HEK293 (cell line): ENCODE measurements at regions of chr10 and their contacts with region 1.

Region 1: DNA sequence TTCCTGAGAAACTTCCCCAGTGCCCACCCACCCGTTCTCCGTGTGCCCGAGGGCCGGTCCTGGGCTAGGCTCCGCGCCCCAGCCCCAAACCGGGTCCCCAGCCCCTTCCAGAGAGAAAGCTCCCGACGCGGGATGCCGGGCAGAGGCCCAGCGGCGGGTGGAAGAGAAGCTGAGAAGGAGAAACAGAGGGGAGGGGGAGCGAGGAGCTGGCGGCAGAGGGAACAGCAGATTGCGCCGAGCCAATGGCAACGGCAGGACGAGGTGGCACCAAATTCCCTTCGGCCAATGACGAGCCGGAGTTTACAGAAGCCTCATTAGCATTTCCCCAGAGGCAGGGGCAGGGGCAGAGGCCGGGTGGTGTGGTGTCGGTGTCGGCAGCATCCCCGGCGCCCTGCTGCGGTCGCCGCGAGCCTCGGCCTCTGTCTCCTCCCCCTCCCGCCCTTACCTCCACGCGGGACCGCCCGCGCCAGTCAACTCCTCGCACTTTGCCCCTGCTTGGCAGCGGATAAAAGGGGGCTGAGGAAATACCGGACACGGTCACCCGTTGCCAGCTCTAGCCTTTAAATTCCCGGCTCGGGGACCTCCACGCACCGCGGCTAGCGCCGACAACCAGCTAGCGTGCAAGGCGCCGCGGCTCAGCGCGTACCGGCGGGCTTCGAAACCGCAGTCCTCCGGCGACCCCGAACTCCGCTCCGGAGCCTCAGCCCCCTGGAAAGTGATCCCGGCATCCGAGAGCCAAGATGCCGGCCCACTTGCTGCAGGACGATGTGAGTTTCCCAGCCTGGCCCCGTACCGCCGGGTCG is at the start of gene SCD:
- H3K4me3 ChIP-seq: peak within 1 kb of the TSS; percentile 77
- H3K27ac ChIP-seq: peak within 1 kb of the TSS; percentile 99
- H3K4me1 ChIP-seq: peaks cover 21% of the 10 kb centered on the region
- CTCF ChIP-seq: no peak

Region 2: GRCh38 chr10:99845837-99846382 is 501.1 kb before region 1 on chr10:
- CTCF ChIA-PET with region 1: no interaction called
- POLR2A ChIA-PET with region 1: interaction called, 13 read pairs
- H3K4me3 ChIP-seq: no peak overlapping the region
- H3K27ac ChIP-seq: no peak overlapping the region
- H3K4me1 ChIP-seq: no peaks in the 10 kb centered on the region
- CTCF ChIP-seq: peak; percentile 87; the same call in 1 of the 2 replicates

Region 3: DNA sequence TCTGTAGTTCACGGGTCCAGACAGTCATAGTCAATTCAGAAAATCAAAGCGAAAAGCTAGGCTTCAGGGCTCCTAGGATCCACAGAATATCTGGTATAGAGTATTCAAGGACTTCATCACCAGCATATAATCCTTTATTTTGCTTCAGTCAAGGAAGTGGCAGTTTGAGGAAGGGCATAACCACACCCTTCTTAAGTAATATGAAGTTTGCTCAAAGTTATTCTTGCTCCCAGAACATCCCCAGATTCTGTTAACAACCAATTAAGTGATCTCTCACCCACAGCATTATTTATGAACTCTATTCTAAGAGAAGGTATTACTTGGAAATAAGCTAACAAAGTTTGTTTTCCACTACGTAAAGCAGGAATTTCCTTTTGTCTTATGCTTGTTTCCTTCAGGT is 92.8 kb before region 1 on chr10:
- CTCF ChIA-PET with region 1: no interaction called
- POLR2A ChIA-PET with region 1: no interaction called
- H3K4me3 ChIP-seq: no peak overlapping the region
- H3K27ac ChIP-seq: no peak overlapping the region
- H3K4me1 ChIP-seq: no peaks in the 10 kb centered on the region
- CTCF ChIP-seq: no peak

Region 4: GRCh38 chr10:100359529-100360150 is 12.7 kb after region 1 on chr10:
- CTCF ChIA-PET with region 1: interaction called, 3 read pairs
- POLR2A ChIA-PET with region 1: interaction called, 26 read pairs
- H3K4me3 ChIP-seq: no peak overlapping the region
- H3K27ac ChIP-seq: no peak overlapping the region
- H3K4me1 ChIP-seq: peaks cover 5% of the 10 kb centered on the region
- CTCF ChIP-seq: no peak

Region 5: GRCh38 chr10:100364735-100365391 is 17.9 kb after region 1 on chr10:
- CTCF ChIA-PET with region 1: interaction called, 15 read pairs
- POLR2A ChIA-PET with region 1: interaction called, 29 read pairs
- H3K4me3 ChIP-seq: no peak overlapping the region
- H3K27ac ChIP-seq: peak overlapping the region; percentile 75
- H3K4me1 ChIP-seq: peaks cover 11% of the 10 kb centered on the region
- CTCF ChIP-seq: no peak

Region 6: DNA sequence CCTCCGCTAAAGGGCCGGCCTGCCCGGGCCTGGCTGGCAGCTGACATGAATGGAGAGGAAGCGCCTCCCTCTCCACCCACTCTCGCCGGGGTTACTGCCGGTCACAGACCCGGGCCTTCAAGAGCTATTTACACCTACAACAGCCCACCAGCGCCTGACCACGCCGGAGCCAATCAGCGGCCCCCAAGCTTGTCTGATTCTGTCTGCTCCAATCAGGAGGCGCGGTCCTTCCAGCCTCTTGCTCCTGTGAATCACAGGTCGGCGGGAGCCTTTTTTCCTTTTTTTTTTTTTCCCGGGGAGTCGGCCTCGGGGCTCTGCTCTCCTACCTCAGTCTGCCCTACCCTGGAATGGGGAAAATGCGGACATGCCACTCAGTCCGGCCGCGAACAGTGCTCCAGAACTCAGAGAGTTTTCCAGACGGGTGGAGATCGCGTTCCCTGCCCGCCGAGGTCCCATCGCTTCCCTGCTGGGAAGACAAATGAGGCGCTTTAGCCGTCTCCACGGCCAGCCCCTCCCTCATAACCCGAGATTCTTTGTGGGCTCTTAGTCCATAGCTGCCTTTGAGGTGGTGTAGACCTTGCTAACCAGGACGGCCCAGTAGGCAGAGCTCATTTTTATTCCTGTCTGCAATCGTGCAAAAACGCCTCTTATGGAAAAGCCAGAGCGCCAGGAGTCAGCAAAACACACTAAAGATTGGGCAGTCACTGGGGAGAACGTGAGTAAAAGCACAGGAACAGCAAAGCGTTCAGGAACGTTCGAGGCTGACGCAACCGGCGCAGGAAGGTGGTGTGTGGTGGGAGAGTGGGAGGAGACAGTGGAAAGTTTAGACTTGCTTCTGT is 26.6 kb after region 1 on chr10:
- CTCF ChIA-PET with region 1: interaction called, 15 read pairs
- POLR2A ChIA-PET with region 1: interaction called, 71 read pairs
- H3K4me3 ChIP-seq: peak overlapping the region; percentile 49
- H3K27ac ChIP-seq: peak overlapping the region; percentile 97
- H3K4me1 ChIP-seq: peaks cover 21% of the 10 kb centered on the region
- CTCF ChIP-seq: no peak